ENCODE measurements at regions of chr11 and their contacts with region 1.

Region 1: DNA sequence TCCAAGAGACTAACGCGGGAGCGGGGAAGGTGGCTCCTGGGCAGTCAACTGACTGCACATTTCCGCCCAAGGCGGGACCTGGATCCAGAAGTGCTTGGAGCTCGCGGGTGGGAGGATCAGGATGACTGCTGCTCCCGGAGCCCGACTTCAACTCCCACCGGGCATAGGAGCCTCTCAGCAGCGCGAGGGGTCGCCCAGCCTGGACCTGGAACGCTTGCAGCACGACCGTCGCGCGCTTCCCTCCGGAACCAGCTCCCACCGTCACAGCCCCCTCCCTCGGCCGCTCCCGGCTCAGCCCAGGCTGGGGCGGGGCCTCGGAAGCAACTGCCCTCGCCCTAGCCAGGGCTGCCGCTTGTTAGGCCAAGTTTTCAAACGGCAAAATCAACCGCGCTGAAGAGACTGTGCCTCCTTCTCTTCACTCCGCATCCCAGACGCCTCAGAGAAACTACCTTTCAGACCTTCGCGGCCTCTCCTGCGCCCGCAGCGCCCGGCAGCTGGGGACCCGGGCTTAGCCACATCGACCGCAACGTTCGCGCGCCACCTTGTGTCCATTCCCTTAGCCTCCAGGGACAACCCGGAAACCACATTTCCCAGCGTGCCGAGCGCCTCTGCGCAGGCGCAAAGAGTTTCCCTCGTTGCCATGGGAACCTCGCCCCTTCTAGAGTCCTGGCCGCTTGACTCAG is 14.0 kb downstream of the SSH3 start:
- DNase-seq: peak; percentile 95 to 99 (median 98)
- ATAC-seq: peak; percentile 90 to 95 (median 90)
- H3K4me3 ChIP-seq: peak overlapping the region; percentile 73 to 96 (median 76)
- H3K27ac ChIP-seq: peak overlapping the region; percentile 77 to 98 (median 85)
- H3K4me1 ChIP-seq: peaks cover 0 to 13% (median 6%) of the 10 kb centered on the region in 3 donors
- H3K27me3 ChIP-seq: no peaks in the 10 kb centered on the region
- CTCF ChIP-seq: peak; percentile 79 to 88 (median 82)

Region 2: GRCh38 chr11:67082035-67082791 is 235.1 kb before region 1 on chr11:
- intact Hi-C with region 1: loop called in 1 of 3 experiments (anchors 10 kb)
- DNase-seq: no peak
- ATAC-seq: peak in 2 of 4 donors; percentile 14 to 20
- H3K4me3 ChIP-seq: peak overlapping the region in 1 of 4 donors; percentile 10
- H3K27ac ChIP-seq: no peak overlapping the region
- H3K4me1 ChIP-seq: peaks cover 0 to 3% (median 0%) of the 10 kb centered on the region in 3 donors
- H3K27me3 ChIP-seq: no peaks in the 10 kb centered on the region
- CTCF ChIP-seq: no peak

Region 3: GRCh38 chr11:67265633-67266423 is 51.5 kb before region 1 on chr11:
- intact Hi-C with region 1: loop called in 2 of 3 experiments (anchors 5 kb)
- DNase-seq: peak; percentile 66 to 96 (median 84)
- ATAC-seq: peak; percentile 69 to 78 (median 74)
- H3K4me3 ChIP-seq: peak overlapping the region in 2 of 4 donors; percentile 28 to 92
- H3K27ac ChIP-seq: peak overlapping the region in 3 of 4 donors; percentile 18 to 67 (median 42)
- H3K4me1 ChIP-seq: peaks cover 21 to 30% (median 29%) of the 10 kb centered on the region in 3 donors
- H3K27me3 ChIP-seq: no peaks in the 10 kb centered on the region
- CTCF ChIP-seq: peak; percentile 56 to 77 (median 68)

Region 4: GRCh38 chr11:67507864-67508485 is 190.6 kb after region 1 on chr11 and contains the start of gene CDK2AP2:
- intact Hi-C with region 1: no loop called
- DNase-seq: peak; percentile 98 to 100 (median 100)
- ATAC-seq: peak; percentile 69 to 86 (median 78)
- H3K4me3 ChIP-seq: peak within 1 kb of the TSS; percentile 50 to 86 (median 85)
- H3K27ac ChIP-seq: peak within 1 kb of the TSS; percentile 95 to 99 (median 98)
- H3K4me1 ChIP-seq: peaks cover 0 to 26% (median 12%) of the 10 kb centered on the region in 3 donors
- H3K27me3 ChIP-seq: no peaks in the 10 kb centered on the region
- CTCF ChIP-seq: no peak
- total RNA-seq, gene CDK2AP2: 27.1 to 41.8 (median 35.2) TPM